ENCODE measurements at regions of chr9 and their contacts with region 1.

Region 1: DNA sequence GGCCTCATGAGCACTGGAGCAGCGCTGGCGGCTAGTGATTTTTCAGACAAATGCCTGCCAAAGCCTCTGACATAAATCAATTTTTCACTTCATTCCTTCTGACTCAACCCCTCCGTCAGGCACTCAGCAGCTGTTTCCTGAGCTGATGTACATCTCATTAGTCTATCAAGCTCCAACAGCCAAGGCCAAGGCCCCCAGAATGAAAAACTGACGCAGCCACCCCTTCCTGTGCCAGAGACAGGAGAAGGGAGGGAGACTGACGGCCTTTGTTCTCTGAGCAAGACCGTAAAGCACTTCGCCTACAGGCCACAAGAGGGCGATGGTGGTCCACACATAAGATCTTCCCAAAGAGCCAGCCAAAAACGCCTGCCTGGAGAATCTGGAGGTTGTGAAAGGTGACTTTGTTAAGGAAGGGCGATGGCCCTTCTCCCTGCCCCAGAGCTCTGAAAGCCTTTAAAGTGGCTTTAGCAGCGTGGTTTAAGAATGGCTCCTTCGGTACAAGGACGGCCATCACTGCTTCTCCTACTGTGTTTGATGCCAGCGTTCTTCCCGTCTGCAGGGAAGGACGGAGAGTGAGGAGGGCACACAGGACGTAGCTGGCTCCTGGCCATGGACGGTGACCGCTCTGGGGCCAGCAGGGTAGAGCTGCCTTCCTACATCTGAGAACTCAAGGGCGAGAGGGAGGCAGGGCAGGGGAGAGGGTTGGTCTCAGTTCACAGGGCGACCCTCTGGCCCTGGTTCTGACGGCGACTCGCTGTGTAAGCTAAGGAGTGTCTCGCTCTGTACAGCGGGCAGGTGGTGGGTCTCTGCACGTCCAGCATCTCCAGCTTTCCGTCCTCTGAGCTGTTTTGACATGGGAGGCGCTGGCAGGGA is 37.0 kb downstream of the ALG2 start:
- DNase-seq: peak; percentile 54
- ATAC-seq: peak; percentile 94
- H3K4me3 ChIP-seq: peak overlapping the region; percentile 26 to 59
- H3K27ac ChIP-seq: no peak overlapping the region
- H3K4me1 ChIP-seq: no peaks in the 10 kb centered on the region
- H3K27me3 ChIP-seq: peaks cover 4% of the 10 kb centered on the region
- CTCF ChIP-seq: peak; percentile 86

Region 2: DNA sequence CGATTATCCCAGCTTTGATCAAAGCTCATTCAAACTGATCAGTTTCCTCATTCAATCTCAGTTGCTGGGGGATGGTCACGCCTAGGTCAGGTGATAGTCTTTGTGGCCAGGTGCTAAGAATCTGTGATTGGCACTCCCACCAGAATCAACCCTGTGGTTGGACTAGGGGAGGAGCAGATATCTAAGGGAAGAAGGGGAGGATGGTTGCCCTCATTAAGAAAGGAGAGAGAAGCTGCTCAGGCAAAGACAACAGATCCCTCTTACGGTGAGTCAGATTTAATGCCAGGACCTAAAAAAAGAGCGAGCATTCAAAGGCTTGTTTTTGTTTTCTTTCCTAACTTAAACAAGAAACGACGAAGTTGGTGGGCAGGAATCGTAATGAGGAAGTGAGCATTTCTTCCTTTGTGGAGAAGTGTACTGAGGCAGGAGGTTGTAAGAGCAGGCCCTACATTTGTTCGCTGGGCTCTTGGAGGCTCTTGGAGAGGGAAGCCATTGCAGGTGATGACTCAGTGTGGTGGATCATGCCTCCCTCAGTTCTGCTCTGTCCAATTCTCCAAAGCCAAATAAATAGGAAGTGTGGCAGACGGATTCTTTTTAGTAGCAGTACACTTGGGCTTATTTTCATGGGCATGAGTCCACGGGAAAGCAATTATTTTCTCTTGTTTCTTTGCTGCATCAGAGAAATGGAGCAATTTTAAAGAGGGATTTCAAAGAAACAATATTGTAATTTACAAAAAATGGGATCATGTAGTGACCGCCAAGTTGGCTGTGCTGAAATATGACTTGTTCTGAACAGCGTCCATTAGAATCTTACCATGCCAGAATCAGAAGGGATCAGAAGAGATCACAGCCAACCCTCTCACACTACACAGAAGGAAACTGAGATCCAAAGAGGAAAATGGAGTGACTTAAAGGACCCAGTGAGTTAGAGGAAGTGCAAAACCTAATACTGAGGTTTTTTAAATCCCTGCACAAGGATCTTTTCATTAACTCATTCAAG is 98.5 kb before region 1 on chr9:
- CTCF ChIA-PET with region 1: no interaction called
- POLR2A ChIA-PET with region 1: no interaction called
- in situ Hi-C with region 1: no loop called
- intact Hi-C with region 1: no loop called
- DNase-seq: no peak
- ATAC-seq: no peak
- H3K4me3 ChIP-seq: no peak overlapping the region
- H3K27ac ChIP-seq: no peak overlapping the region
- H3K4me1 ChIP-seq: no peaks in the 10 kb centered on the region
- H3K27me3 ChIP-seq: no peaks in the 10 kb centered on the region
- CTCF ChIP-seq: no peak

Region 3: DNA sequence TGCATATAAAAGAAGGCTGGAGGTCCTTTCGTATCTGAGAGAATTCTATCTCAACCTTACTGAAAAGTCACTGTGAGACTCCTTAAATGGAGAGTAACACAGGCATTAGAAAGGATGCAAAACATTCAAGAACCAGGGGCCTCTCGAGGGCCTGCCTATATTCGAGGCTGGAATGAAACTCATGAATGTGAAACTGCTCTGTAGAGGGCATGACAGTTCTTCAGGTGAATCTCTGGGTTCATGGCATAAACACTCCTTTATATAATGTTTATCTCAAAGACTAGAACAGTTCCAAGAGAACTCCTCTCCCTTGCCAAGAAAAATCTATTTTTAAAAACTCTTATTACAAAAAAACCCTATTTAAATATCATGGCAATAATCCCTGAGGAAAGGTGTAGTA is 151.3 kb after region 1 on chr9:
- CTCF ChIA-PET with region 1: no interaction called
- POLR2A ChIA-PET with region 1: no interaction called
- in situ Hi-C with region 1: no loop called
- intact Hi-C with region 1: no loop called
- DNase-seq: no peak
- ATAC-seq: no peak
- H3K4me3 ChIP-seq: no peak overlapping the region
- H3K27ac ChIP-seq: no peak overlapping the region
- H3K4me1 ChIP-seq: no peaks in the 10 kb centered on the region
- H3K27me3 ChIP-seq: no peaks in the 10 kb centered on the region
- CTCF ChIP-seq: no peak

Region 4: DNA sequence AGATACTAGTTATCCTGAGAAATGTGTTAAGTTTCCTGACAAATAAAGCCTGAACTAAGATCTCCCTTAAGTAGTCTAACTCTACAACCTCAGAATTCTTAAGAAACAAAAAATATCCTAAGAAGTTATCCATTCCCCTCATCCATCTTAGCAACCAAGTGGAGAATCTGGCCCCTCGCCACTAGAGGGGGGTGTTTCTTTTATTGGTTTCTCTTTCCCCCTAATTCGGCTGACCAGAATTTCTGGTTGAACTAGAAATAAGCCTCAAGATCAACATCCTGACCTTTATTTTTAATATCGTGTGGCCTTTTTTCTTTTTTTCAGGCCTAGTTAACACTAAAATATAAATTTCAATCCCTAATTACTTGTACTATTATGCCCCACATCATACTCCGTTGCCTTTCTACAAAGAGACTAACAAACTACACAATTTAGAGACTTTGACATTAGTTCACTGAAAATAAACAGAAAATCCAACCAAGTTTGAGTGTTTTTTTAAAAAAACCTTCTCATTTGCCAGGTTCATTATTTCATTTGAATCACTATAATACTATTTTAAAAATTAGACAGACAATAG is 622.7 kb after region 1 on chr9:
- CTCF ChIA-PET with region 1: no interaction called
- POLR2A ChIA-PET with region 1: no interaction called
- in situ Hi-C with region 1: no loop called
- intact Hi-C with region 1: loop called (anchors 10 kb)
- DNase-seq: no peak
- ATAC-seq: 0 out of 2 replicates have a peak, but pooled peaks have one; percentile 70
- H3K4me3 ChIP-seq: no peak overlapping the region
- H3K27ac ChIP-seq: no peak overlapping the region
- H3K4me1 ChIP-seq: no peaks in the 10 kb centered on the region
- H3K27me3 ChIP-seq: no peaks in the 10 kb centered on the region
- CTCF ChIP-seq: peak; percentile 71; the same call in 1 of the 2 replicates

Measured in Panc1 (cell line).